ENCODE measurements at regions of chr2 and their contacts with region 1.

Region 1: GRCh38 chr2:205139822-205140463 is 542.4 kb upstream of the NRP2 start:
- DNase-seq: no peak
- H3K4me3 ChIP-seq: no peak overlapping the region
- H3K27ac ChIP-seq: no peak overlapping the region
- H3K4me1 ChIP-seq: no peaks in the 10 kb centered on the region
- H3K27me3 ChIP-seq: no peaks in the 10 kb centered on the region
- CTCF ChIP-seq: no peak
- POLR2A ChIP-seq: no peak

Region 2: DNA sequence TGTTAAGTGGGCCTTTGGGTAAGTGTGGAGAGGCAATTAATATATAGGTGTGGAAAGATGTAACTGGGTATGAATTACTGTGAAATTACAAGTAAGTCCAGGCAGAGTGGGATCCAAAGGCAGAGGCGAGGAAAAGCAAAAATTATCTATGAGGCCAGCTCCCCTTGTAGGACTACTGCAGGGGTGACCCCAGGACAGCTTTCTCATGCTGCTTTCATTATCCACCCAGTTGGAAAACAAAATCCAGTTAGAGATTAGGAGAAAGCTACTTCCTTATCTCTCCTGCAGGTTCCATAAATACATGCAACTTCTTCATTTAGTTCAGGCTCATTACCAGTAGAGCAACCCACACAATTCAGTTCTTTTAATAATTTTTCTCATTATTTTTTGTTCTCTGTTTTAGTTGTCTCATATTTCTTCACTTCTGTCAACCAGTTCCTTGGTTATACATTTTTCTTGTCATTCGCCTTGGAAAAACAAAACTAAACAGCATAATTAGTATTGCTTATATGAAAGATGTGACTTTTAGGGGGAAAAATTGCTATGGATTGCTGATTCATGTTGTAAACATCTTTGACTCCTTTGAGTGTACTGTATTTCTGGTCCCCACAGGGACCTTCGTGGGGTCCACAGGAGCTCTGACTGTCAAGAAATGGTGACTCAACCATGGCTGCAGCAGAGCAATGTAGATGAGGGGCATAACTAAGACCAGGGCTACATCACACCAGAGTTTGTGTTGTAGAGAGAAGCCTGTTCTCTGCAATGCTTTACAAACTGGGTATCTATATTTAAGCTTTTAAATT is 705.1 kb before region 1 on chr2:
- intact Hi-C with region 1: loop called (anchors 5 kb)
- DNase-seq: no peak
- H3K4me3 ChIP-seq: no peak overlapping the region
- H3K27ac ChIP-seq: no peak overlapping the region
- H3K4me1 ChIP-seq: no peaks in the 10 kb centered on the region
- H3K27me3 ChIP-seq: no peaks in the 10 kb centered on the region
- CTCF ChIP-seq: no peak
- POLR2A ChIP-seq: no peak

Region 3: DNA sequence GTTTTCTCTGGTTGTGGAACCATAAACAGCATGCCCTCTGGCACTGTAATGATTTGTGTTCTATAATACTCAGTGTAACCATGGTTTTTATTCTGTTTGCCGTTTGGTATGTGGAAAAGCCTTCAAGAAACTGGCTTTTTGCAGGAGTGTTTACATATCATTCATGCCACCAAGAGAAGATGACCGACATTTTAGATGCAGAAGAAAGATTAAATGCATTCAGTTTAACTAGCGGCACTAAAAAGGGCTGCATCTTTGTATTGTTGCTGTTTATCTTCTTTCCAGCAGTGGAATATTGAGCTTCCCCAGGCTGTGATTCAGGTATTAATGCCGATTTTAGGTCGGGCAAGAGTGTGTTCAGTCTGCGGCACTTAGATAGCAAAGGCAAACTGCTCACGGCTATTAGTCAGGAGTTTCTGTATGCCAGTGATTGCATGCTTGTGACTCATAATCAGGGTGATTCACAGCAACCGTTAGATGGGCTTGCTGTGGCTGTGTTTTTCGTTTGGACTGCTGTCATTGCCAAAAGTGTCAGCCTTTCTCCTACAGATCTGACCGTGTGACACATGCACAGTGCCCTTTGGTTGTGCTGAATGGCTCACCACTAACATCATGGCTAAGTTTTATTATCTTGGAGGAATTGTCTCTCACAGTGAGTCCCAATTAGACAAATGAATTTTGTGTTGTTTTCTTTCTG is 115.0 kb before region 1 on chr2:
- intact Hi-C with region 1: no loop called
- DNase-seq: no peak
- H3K4me3 ChIP-seq: peak overlapping the region in 1 of 3 donors; percentile 30
- H3K27ac ChIP-seq: no peak overlapping the region
- H3K4me1 ChIP-seq: no peaks in the 10 kb centered on the region
- H3K27me3 ChIP-seq: no peaks in the 10 kb centered on the region
- CTCF ChIP-seq: no peak
- POLR2A ChIP-seq: no peak

Measured in breast epithelium (tissue), 4 donors.